ENCODE measurements at regions of chr10 and their contacts with region 1.

Region 1: GRCh38 chr10:84360637-84361365 is 32.4 kb downstream of the CCSER2 start:
- DNase-seq: peak in 1 of 5 donors; percentile 6
- H3K4me3 ChIP-seq: peak overlapping the region in 2 of 3 donors; percentile 65 to 80
- H3K27ac ChIP-seq: peak overlapping the region in 1 of 2 donors; percentile 41
- H3K4me1 ChIP-seq: peaks cover 0 to 10% (median 4%) of the 10 kb centered on the region in 3 donors
- H3K27me3 ChIP-seq: no peaks in the 10 kb centered on the region
- CTCF ChIP-seq: no peak

Region 2: GRCh38 chr10:84264611-84265141 is 96.1 kb before region 1 on chr10:
- intact Hi-C with region 1: loop called (anchors 10 kb)
- DNase-seq: peak in 4 of 5 donors; percentile 57 to 70 (median 60)
- H3K4me3 ChIP-seq: no peak overlapping the region
- H3K27ac ChIP-seq: no peak overlapping the region
- H3K4me1 ChIP-seq: peaks cover 0 to 3% (median 0%) of the 10 kb centered on the region in 3 donors
- H3K27me3 ChIP-seq: no peaks in the 10 kb centered on the region
- CTCF ChIP-seq: peak; percentile 88

Region 3: GRCh38 chr10:84288151-84288550 is 72.7 kb before region 1 on chr10:
- intact Hi-C with region 1: no loop called
- DNase-seq: no peak
- H3K4me3 ChIP-seq: no peak overlapping the region
- H3K27ac ChIP-seq: no peak overlapping the region
- H3K4me1 ChIP-seq: no peaks in the 10 kb centered on the region
- H3K27me3 ChIP-seq: no peaks in the 10 kb centered on the region
- CTCF ChIP-seq: no peak